Activated B cell treated with CpG ODN at 0.5 μM for 24 hours (primary cell): ENCODE measurements at regions of chr6 and their contacts with region 1.

Region 1: GRCh38 chr6:26473758-26474438 is 16.1 kb downstream of the BTN2A1 start:
- DNase-seq: peak; percentile 49
- ATAC-seq: peak; percentile 94
- H3K4me3 Mint-ChIP-seq: peak overlapping the region; percentile 96
- H3K27ac Mint-ChIP-seq: peak overlapping the region; percentile 100
- H3K4me1 Mint-ChIP-seq: peaks cover 70% of the 10 kb centered on the region
- H3K27me3 Mint-ChIP-seq: no peaks in the 10 kb centered on the region
- CTCF ChIP-seq: no peak

Region 2: GRCh38 chr6:26401987-26402658 is 71.8 kb before region 1 on chr6 and contains the start of gene BTN3A1:
- CTCF ChIA-PET with region 1: no interaction called
- POLR2A ChIA-PET with region 1: interaction called, 4 read pairs
- intact Hi-C with region 1: loop called (anchors 1 kb)
- DNase-seq: peak; percentile 43
- ATAC-seq: peak; percentile 87
- H3K4me3 Mint-ChIP-seq: peak within 1 kb of the TSS; percentile 98
- H3K27ac Mint-ChIP-seq: peak within 1 kb of the TSS; percentile 98
- H3K4me1 Mint-ChIP-seq: peaks cover 65% of the 10 kb centered on the region
- H3K27me3 Mint-ChIP-seq: no peaks in the 10 kb centered on the region
- CTCF ChIP-seq: no peak
- total RNA-seq, gene BTN3A1: 55.4 and 61.7 TPM in 2 replicates

Region 3: GRCh38 chr6:26439657-26440056 is 34.2 kb before region 1 on chr6:
- CTCF ChIA-PET with region 1: no interaction called
- POLR2A ChIA-PET with region 1: interaction called, 18 read pairs
- intact Hi-C with region 1: loop called (anchors 2 kb)
- DNase-seq: no peak
- ATAC-seq: no peak
- H3K4me3 Mint-ChIP-seq: peak overlapping the region; percentile 92
- H3K27ac Mint-ChIP-seq: peak overlapping the region; percentile 90
- H3K4me1 Mint-ChIP-seq: peaks cover 40% of the 10 kb centered on the region
- H3K27me3 Mint-ChIP-seq: no peaks in the 10 kb centered on the region
- CTCF ChIP-seq: no peak

Region 4: DNA sequence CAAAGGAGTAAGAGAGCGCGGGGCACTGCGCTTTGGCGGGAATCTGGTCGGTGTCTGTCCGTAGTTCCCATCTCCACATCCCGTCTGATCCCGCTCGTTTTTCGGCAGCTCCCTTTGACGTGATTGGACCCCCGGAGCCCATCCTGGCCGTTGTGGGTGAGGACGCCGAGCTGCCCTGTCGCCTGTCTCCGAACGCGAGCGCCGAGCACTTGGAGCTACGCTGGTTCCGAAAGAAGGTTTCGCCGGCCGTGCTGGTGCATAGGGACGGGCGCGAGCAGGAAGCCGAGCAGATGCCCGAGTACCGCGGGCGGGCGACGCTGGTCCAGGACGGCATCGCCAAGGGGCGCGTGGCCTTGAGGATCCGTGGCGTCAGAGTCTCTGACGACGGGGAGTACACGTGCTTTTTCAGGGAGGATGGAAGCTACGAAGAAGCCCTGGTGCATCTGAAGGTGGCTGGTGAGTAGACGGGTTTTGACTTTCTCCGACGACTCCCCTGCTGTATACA is 27.6 kb after region 1 on chr6:
- CTCF ChIA-PET with region 1: no interaction called
- POLR2A ChIA-PET with region 1: interaction called, 15 read pairs
- intact Hi-C with region 1: no loop called
- DNase-seq: peak; percentile 37
- ATAC-seq: peak; percentile 58
- H3K4me3 Mint-ChIP-seq: peak overlapping the region; percentile 85
- H3K27ac Mint-ChIP-seq: no peak overlapping the region
- H3K4me1 Mint-ChIP-seq: peaks cover 25% of the 10 kb centered on the region
- H3K27me3 Mint-ChIP-seq: peaks cover 2% of the 10 kb centered on the region
- CTCF ChIP-seq: no peak

Region 5: DNA sequence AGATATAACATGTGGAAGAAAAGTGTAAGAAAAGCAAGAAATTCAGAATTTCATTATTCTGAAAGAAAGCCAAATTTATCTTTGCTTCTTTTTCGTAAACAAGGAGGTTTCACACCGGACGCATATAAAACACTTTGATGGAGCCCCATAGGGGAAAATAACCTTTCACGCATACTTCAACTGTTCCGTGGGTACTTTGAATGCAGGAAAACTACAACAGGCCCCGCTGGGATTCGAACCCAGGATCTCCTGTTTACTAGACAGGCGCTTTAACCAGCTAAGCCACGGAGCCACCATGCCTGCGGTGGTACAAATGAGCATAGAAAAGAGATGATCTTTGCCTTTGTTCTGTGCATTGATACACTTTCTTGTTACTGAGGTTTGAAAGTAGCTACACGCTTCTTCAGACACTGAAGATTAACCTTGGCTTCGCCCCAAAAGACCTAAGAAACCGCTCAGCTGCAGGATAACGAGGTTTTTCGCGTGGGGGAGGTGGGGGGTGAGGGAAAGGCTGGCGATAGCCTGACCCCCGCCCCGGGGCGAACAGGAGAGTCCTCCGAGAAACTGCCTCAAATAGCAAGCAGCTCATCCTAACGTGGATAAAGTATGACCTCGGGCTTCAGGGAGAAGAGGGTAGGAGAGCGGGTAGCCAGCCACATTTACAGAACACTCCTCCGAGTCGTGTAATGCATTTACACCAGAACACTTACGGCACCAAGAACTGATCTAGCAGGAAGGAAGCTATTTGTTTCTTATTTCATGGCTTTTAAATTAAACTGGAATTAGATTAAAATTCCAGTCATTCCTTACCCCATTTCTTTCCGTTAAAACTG is 59.0 kb after region 1 on chr6:
- CTCF ChIA-PET with region 1: no interaction called
- POLR2A ChIA-PET with region 1: interaction called, 60 read pairs
- intact Hi-C with region 1: loop called (anchors 1 kb)
- DNase-seq: peak; percentile 73
- ATAC-seq: peak; percentile 38
- H3K4me3 Mint-ChIP-seq: peak overlapping the region; percentile 92
- H3K27ac Mint-ChIP-seq: peak overlapping the region; percentile 91
- H3K4me1 Mint-ChIP-seq: peaks cover 47% of the 10 kb centered on the region
- H3K27me3 Mint-ChIP-seq: peaks cover 8% of the 10 kb centered on the region
- CTCF ChIP-seq: no peak

Region 6: DNA sequence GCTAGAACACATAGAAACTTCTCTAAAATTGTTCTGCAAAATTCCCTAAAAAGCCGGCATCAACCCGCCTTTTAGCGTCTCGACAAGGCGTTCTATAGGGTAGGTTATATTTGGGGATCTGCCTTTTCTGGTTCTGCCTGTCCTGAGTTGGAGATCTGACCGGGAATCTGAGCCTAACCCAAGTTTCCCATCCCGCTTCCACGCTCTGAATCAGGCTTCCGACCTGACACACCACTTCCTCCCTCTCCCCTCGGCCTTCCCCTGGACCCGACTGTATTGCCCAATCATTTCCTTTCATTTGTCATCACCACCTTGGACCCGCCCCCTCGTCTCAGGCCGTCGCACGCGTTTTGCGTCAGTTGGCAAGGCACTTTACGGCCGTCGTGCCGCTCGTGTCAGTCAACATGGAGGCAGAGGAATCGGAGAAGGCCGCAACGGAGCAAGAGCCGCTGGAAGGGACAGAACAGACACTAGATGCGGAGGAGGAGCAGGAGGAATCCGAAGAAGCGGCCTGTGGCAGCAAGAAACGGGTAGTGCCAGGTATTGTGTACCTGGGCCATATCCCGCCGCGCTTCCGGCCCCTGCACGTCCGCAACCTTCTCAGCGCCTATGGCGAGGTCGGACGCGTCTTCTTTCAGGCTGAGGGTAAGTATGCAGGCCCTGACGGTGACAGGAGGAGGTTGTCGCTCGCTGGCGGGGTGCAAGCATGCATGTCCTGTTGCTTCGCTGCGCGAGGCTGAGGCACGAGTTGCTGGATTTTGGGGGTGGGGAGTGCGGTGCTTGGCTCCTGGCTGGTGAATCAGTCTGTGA is 122.9 kb after region 1 on chr6 and contains the start of gene ABT1:
- CTCF ChIA-PET with region 1: no interaction called
- POLR2A ChIA-PET with region 1: interaction called, 3 read pairs
- intact Hi-C with region 1: loop called (anchors 1 kb)
- DNase-seq: peak; percentile 91
- ATAC-seq: peak; percentile 90
- H3K4me3 Mint-ChIP-seq: no peak within 1 kb of the TSS
- H3K27ac Mint-ChIP-seq: no peak within 1 kb of the TSS
- H3K4me1 Mint-ChIP-seq: peaks cover 17% of the 10 kb centered on the region
- H3K27me3 Mint-ChIP-seq: peaks cover 5% of the 10 kb centered on the region
- CTCF ChIP-seq: no peak
- total RNA-seq, gene ABT1: 30.7 and 30.8 TPM in 2 replicates